H1 (cell line): ENCODE measurements at regions of chr7 and their contacts with region 1.

Region 1: GRCh38 chr7:139471740-139472353 is 11.6 kb downstream of the KLRG2 start:
- DNase-seq: no peak
- H3K4me3 ChIP-seq: no peak overlapping the region
- H3K27ac ChIP-seq: peak overlapping the region; percentile 45; the same call in 1 of the 2 replicates
- H3K4me1 ChIP-seq: no peaks in the 10 kb centered on the region; a peak in 2 of 7 replicates
- H3K27me3 ChIP-seq: no peaks in the 10 kb centered on the region
- CTCF ChIP-seq: no peak
- EP300 ChIP-seq: no peak
- POLR2A ChIP-seq: no peak
- RAD21 ChIP-seq: no peak

Region 2: GRCh38 chr7:139109188-139109982 is 362.5 kb before region 1 on chr7 and contains the start of gene ZC3HAV1:
- CTCF ChIA-PET with region 1: no interaction called
- POLR2A ChIA-PET with region 1: no interaction called
- DNase-seq: peak in 1 of 2 experiments; percentile 79
- H3K4me3 ChIP-seq: peak within 1 kb of the TSS; percentile 73 to 97 (median 95)
- H3K27ac ChIP-seq: peak within 1 kb of the TSS; percentile 26; the same call in 1 of the 2 replicates
- H3K4me1 ChIP-seq: peaks cover 0 to 9% (median 5%) of the 10 kb centered on the region in 4 experiments; a peak in 3 of 7 replicates
- H3K27me3 ChIP-seq: peaks cover 0 to 7% (median 5%) of the 10 kb centered on the region in 4 experiments; a peak in 5 of 7 replicates
- CTCF ChIP-seq: no peak
- EP300 ChIP-seq: no peak
- POLR2A ChIP-seq: peak in 1 of 2 experiments; percentile 61; a peak in 2 of 3 replicates
- RAD21 ChIP-seq: no peak; a peak in 1 of 4 replicates
- total RNA-seq, gene ZC3HAV1: 43.4 and 44.3 TPM in 2 replicates

Region 3: GRCh38 chr7:139436806-139437205 is 35.0 kb before region 1 on chr7:
- CTCF ChIA-PET with region 1: interaction called, 43 read pairs
- POLR2A ChIA-PET with region 1: no interaction called
- DNase-seq: no peak
- H3K4me3 ChIP-seq: no peak overlapping the region
- H3K27ac ChIP-seq: no peak overlapping the region
- H3K4me1 ChIP-seq: no peaks in the 10 kb centered on the region; a peak in 1 of 7 replicates
- H3K27me3 ChIP-seq: no peaks in the 10 kb centered on the region
- CTCF ChIP-seq: no peak
- EP300 ChIP-seq: no peak
- POLR2A ChIP-seq: no peak
- RAD21 ChIP-seq: no peak